HEK293 (cell line): ENCODE measurements at regions of chr5 and their contacts with region 1.

Region 1: DNA sequence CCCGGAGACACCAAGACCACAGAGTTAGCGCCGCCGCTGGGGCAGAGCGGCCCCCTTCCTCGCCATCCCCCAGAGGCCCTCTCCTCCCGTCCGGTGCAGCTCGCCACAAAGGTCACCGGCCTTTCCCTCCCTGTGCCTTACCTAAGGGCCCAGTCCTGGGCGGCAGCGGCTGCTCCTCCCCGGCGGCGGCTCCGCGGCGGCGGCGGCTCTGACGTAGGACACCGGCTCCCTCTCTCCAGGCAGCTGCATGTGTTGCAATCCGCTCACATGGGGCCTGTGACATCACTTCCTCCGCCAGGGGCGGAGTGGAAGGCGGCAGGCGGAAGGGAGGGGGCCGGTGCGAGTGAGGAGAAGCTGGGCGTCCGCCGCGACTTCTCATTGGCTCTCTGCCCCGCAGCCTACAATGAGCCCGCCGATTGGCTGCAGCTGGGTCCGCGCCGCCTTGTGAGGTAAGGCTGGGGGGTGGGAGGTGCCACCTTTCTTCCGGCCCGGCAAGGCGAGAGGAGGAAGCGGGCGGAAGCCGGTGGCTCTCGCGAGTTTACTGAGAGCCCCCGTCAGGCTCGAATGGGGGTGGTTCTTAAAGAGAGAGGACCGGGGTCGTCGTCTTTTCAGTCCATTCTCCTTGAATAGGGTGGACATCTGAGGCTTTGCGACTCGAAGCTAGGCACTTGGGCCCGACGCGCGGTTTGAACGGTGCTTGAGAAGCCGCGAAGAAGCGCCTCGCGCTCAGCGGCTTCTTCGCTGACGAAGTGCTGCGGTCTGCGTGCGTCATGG is at the start of gene ETF1:
- H3K4me3 ChIP-seq: peak within 1 kb of the TSS; percentile 100
- H3K27ac ChIP-seq: peak within 1 kb of the TSS; percentile 77
- H3K4me1 ChIP-seq: peaks cover 11% of the 10 kb centered on the region
- CTCF ChIP-seq: no peak

Region 2: GRCh38 chr5:138464008-138464387 is 79.1 kb before region 1 on chr5:
- CTCF ChIA-PET with region 1: interaction called, 3 read pairs
- POLR2A ChIA-PET with region 1: interaction called, 19 read pairs
- H3K4me3 ChIP-seq: peak overlapping the region; percentile 88
- H3K27ac ChIP-seq: peak overlapping the region; percentile 94
- H3K4me1 ChIP-seq: peaks cover 4% of the 10 kb centered on the region; the same call in 1 of the 2 replicates
- CTCF ChIP-seq: peak; percentile 97

Region 3: GRCh38 chr5:138528208-138528607 is 14.9 kb before region 1 on chr5:
- CTCF ChIA-PET with region 1: interaction called, 4 read pairs
- POLR2A ChIA-PET with region 1: interaction called, 30 read pairs
- H3K4me3 ChIP-seq: no peak overlapping the region
- H3K27ac ChIP-seq: no peak overlapping the region
- H3K4me1 ChIP-seq: peaks cover 17% of the 10 kb centered on the region
- CTCF ChIP-seq: no peak

Region 4: GRCh38 chr5:138575194-138576015 is 32.3 kb after region 1 on chr5 and contains the start of gene HSPA9:
- CTCF ChIA-PET with region 1: interaction called, 4 read pairs
- POLR2A ChIA-PET with region 1: interaction called, 27 read pairs
- H3K4me3 ChIP-seq: peak within 1 kb of the TSS; percentile 75
- H3K27ac ChIP-seq: peak within 1 kb of the TSS; percentile 99
- H3K4me1 ChIP-seq: no peaks in the 10 kb centered on the region
- CTCF ChIP-seq: peak; percentile 54; the same call in 1 of the 2 replicates